Activated T-helper 2 cell treated with anti-CD3 and anti-CD28 coated beads, Interferon-gamma antibody, Interleukin-2, Interleukin-4, amounts not matched to agents 10 μg/mL and 5 μg/mL and 100 μg/mL, durations not matched to agents 14 hours and 24 hours and 36 hours (primary cell): ENCODE measurements at regions of chr1 and their contacts with region 1.

Region 1: DNA sequence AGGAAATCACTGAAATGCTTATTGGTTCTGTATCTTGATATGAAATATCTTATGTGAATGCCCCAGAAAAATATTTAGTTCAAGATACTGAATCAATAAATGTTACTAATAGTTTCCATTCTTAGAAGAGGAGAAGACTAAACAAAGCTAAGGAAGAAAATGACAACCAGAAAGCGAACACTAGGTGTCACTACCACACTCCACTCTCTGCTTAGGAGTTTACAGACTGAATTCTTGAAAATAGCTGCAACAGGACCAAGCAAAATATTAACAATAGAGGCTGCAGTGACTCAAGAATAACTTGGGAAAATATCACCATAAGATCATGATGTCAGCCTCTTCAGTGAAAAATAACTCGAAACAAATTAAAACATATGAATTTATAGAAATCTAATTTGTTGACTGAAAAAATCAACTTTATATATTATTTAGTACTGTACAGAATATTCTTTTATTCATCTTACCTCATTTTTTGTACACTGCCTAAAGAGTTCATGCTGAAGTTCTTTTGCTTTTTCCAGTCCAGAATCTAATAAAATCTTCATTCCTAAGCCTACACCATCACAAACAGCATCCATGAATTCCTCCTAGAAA is 61.6 kb downstream of the KIF14 start:
- DNase-seq: no peak
- H3K4me3 Mint-ChIP-seq: no peak overlapping the region
- H3K27ac Mint-ChIP-seq: no peak overlapping the region
- H3K4me1 Mint-ChIP-seq: peaks cover 12% of the 10 kb centered on the region
- H3K27me3 Mint-ChIP-seq: no peaks in the 10 kb centered on the region

Region 2: DNA sequence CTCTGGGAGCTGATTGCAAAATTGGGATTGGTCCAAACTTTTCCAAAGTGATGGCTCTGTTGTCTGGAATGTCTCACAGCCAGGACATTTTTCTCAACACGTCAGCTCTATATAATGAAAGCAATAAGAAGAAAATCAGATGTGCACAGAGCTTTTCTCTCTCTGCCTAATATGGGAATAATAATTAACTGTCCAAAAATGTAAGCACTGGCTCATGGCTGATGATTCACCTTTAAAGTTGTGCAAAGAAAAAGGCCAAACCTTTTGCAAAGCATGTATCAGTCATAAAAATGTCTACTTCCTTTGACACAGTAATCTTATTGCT is 179.6 kb before region 1 on chr1:
- intact Hi-C with region 1: no loop called
- DNase-seq: no peak
- H3K4me3 Mint-ChIP-seq: no peak overlapping the region
- H3K27ac Mint-ChIP-seq: no peak overlapping the region
- H3K4me1 Mint-ChIP-seq: peaks cover 19% of the 10 kb centered on the region
- H3K27me3 Mint-ChIP-seq: no peaks in the 10 kb centered on the region

Region 3: DNA sequence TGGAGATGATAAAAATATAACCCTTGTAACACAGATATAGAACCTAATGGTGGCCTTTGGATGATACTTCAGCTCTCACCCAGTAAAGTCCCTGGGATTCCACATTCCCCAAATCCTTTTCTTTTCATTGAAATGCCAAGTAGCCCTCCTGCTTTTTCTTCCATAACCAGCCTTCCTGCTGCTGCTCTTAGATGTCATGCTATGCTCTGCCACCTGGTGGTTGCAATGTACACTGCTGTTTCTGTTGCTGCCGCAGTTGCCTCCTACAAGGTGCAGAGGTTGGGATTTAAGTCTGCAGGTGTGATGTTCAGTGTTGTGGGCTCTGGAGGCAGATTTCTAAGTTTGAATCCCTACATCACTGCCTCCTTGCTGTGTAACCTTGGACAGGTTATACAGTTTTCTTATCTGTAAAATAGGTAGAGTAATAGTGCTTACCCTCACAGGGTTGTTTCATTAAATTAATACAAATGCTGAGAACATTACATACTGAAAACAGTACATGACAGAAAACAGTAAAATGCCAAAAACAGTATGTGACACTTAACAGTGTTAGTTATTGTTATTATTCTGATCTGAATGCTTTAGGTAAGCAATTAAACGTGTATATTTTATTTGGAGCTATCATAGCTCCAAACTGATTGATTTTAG is 244.0 kb after region 1 on chr1:
- intact Hi-C with region 1: loop called (anchors 2 kb)
- DNase-seq: peak; percentile 49
- H3K4me3 Mint-ChIP-seq: no peak overlapping the region
- H3K27ac Mint-ChIP-seq: no peak overlapping the region
- H3K4me1 Mint-ChIP-seq: peaks cover 2% of the 10 kb centered on the region
- H3K27me3 Mint-ChIP-seq: peaks cover 38% of the 10 kb centered on the region